WTC11 (cell line): ENCODE measurements at regions of chr5 and their contacts with region 1.

Region 1: DNA sequence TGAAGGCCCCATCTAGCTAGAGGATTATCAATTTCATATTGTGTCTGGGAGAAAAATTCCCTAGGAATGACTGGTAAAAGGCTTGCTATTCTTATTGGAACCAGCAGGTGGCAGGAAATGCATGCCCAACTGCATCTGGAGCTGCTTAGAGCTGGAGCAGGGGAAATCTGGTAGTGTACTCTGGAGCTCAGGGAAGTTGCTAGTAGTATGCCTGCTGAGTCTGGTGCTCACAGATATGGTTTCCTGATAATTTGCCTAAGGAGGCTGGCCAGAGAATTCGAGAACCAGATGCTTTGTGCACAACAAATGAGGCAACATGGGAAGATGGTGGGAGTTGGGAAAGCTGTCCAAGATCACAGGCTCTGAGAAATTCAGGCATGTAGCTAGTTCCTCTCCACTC is 53.7 kb downstream of the G3BP1 start:
- DNase-seq: peak; percentile 64
- ATAC-seq: peak; percentile 79
- H3K4me3 Mint-ChIP-seq: no peak overlapping the region
- H3K27ac Mint-ChIP-seq: no peak overlapping the region; the same call in 1 of the 2 replicates
- H3K4me1 Mint-ChIP-seq: peaks cover 7% of the 10 kb centered on the region
- H3K27me3 Mint-ChIP-seq: no peaks in the 10 kb centered on the region; the same call in 1 of the 2 replicates
- CTCF ChIP-seq: peak; percentile 79

Region 2: GRCh38 chr5:151384106-151384505 is 441.3 kb before region 1 on chr5:
- CTCF ChIA-PET with region 1: no interaction called
- POLR2A ChIA-PET with region 1: no interaction called
- DNase-seq: no peak
- ATAC-seq: no peak
- H3K4me3 Mint-ChIP-seq: no peak overlapping the region
- H3K27ac Mint-ChIP-seq: no peak overlapping the region
- H3K4me1 Mint-ChIP-seq: peaks cover 55% of the 10 kb centered on the region
- H3K27me3 Mint-ChIP-seq: peaks cover 2% of the 10 kb centered on the region; the same call in 1 of the 2 replicates
- CTCF ChIP-seq: no peak

Region 3: DNA sequence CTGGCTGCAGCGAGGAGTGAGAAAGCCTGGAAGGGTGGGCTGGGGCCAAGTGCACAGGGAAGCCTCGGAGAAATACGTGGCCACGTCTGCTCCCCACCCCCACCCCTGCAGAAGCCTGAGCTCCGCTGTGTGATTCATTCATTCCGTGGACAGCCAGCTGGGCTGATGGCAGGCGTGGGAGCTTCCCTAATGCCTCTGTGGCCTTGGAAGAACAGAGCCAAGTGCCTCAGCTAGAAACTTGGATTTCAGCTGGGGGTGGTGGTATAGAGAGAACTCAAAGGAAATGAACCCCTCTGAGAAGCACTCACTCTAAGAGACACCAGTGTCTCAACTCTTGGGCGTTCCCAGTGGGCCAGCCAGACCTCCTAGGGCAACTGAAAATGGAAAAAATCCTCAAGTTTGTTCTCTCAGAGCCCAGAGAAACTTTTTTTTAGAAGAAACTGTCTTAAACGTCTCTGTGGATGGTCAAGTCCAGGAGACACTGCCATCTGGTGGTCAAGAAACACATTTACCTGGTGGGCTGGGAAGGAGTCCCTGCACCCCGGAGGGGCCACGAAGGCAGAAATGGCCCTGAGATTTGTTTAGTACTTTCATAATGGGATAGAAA is 85.0 kb before region 1 on chr5:
- CTCF ChIA-PET with region 1: no interaction called
- POLR2A ChIA-PET with region 1: no interaction called
- DNase-seq: peak; percentile 56
- ATAC-seq: peak; percentile 61
- H3K4me3 Mint-ChIP-seq: no peak overlapping the region; the same call in 1 of the 2 replicates
- H3K27ac Mint-ChIP-seq: peak overlapping the region; percentile 89
- H3K4me1 Mint-ChIP-seq: peaks cover 17% of the 10 kb centered on the region
- H3K27me3 Mint-ChIP-seq: no peaks in the 10 kb centered on the region
- CTCF ChIP-seq: peak; percentile 92

Region 4: GRCh38 chr5:151815051-151815450 is 10.4 kb before region 1 on chr5:
- CTCF ChIA-PET with region 1: interaction called, 25 read pairs
- POLR2A ChIA-PET with region 1: no interaction called
- DNase-seq: no peak
- ATAC-seq: no peak; the same call in 1 of the 2 replicates
- H3K4me3 Mint-ChIP-seq: no peak overlapping the region
- H3K27ac Mint-ChIP-seq: peak overlapping the region; percentile 19
- H3K4me1 Mint-ChIP-seq: peaks cover 45% of the 10 kb centered on the region
- H3K27me3 Mint-ChIP-seq: no peaks in the 10 kb centered on the region
- CTCF ChIP-seq: no peak

Region 5: GRCh38 chr5:152164860-152165259 is 339.4 kb after region 1 on chr5:
- CTCF ChIA-PET with region 1: interaction called, 12 read pairs
- POLR2A ChIA-PET with region 1: no interaction called
- DNase-seq: no peak
- ATAC-seq: peak; percentile 94
- H3K4me3 Mint-ChIP-seq: no peak overlapping the region
- H3K27ac Mint-ChIP-seq: no peak overlapping the region
- H3K4me1 Mint-ChIP-seq: peaks cover 29% of the 10 kb centered on the region
- H3K27me3 Mint-ChIP-seq: no peaks in the 10 kb centered on the region; the same call in 1 of the 2 replicates
- CTCF ChIP-seq: no peak

Region 6: GRCh38 chr5:152271420-152271819 is 446.0 kb after region 1 on chr5:
- CTCF ChIA-PET with region 1: interaction called, 16 read pairs
- POLR2A ChIA-PET with region 1: no interaction called
- DNase-seq: peak; percentile 22
- ATAC-seq: peak; percentile 86
- H3K4me3 Mint-ChIP-seq: no peak overlapping the region
- H3K27ac Mint-ChIP-seq: no peak overlapping the region
- H3K4me1 Mint-ChIP-seq: no peaks in the 10 kb centered on the region
- H3K27me3 Mint-ChIP-seq: peaks cover 49% of the 10 kb centered on the region
- CTCF ChIP-seq: no peak

Region 7: DNA sequence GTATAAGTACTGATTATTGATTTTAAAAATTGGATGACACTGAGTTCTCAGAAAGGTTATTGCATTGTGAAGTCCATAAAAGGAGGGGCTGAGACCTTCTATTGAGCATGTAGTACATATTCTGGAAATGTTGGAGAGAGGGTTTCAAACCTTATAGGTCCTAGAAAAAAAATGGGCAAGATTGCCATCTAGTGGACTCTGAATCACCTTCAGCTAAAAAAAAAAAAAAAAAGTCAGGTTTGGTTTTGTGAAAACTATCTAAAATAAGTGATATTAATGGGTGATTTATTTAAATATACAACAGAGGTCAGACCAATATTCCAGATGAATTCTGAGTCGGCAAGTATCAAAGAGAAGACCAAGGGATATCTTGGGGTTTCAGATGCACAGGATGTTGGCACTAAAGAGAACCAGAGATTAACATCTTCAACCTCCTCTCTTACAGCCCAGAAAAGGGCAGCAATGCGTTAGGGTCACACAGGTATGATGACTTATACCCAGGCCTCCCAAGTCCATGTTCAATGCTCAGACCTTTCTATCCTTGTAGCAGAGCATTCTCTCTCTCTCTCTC is 689.5 kb after region 1 on chr5:
- CTCF ChIA-PET with region 1: interaction called, 10 read pairs
- POLR2A ChIA-PET with region 1: no interaction called
- DNase-seq: no peak
- ATAC-seq: peak; percentile 39; the same call in 1 of the 2 replicates
- H3K4me3 Mint-ChIP-seq: no peak overlapping the region
- H3K27ac Mint-ChIP-seq: no peak overlapping the region
- H3K4me1 Mint-ChIP-seq: peaks cover 10% of the 10 kb centered on the region
- H3K27me3 Mint-ChIP-seq: peaks cover 10% of the 10 kb centered on the region
- CTCF ChIP-seq: no peak